Heart right ventricle (tissue), 16 donors: ENCODE measurements at regions of chr7 and their contacts with region 1.

Region 1: GRCh38 chr7:37901236-37901827 is 15.3 kb downstream of the SFRP4 start:
- DNase-seq: no peak
- ATAC-seq: peak in 5 of 8 donors; percentile 47 to 62 (median 57)
- H3K4me3 ChIP-seq: no peak overlapping the region
- H3K27ac ChIP-seq: peak overlapping the region in 1 of 10 donors; percentile 37
- H3K4me1 ChIP-seq: peaks cover 0 to 17% (median 7%) of the 10 kb centered on the region in 9 donors
- H3K27me3 ChIP-seq: no peaks in the 10 kb centered on the region
- CTCF ChIP-seq: peak; percentile 15 to 69 (median 56)

Region 2: GRCh38 chr7:37759526-37759925 is 141.8 kb before region 1 on chr7:
- intact Hi-C with region 1: no loop called
- DNase-seq: no peak
- ATAC-seq: no peak
- H3K4me3 ChIP-seq: no peak overlapping the region
- H3K27ac ChIP-seq: no peak overlapping the region
- H3K4me1 ChIP-seq: peaks cover 0 to 13% (median 7%) of the 10 kb centered on the region in 9 donors
- H3K27me3 ChIP-seq: no peaks in the 10 kb centered on the region
- CTCF ChIP-seq: no peak

Region 3: GRCh38 chr7:38222481-38223096 is 321.3 kb after region 1 on chr7:
- intact Hi-C with region 1: loop called in 9 of 10 experiments (anchors 2 to 5 kb)
- DNase-seq: peak in 1 of 2 donors; percentile 36
- ATAC-seq: peak in 7 of 8 donors; percentile 66 to 85 (median 71)
- H3K4me3 ChIP-seq: no peak overlapping the region
- H3K27ac ChIP-seq: peak overlapping the region in 1 of 10 donors; percentile 41
- H3K4me1 ChIP-seq: peaks cover 0 to 16% (median 0%) of the 10 kb centered on the region in 9 donors
- H3K27me3 ChIP-seq: no peaks in the 10 kb centered on the region
- CTCF ChIP-seq: peak; percentile 73 to 93 (median 89)

Region 4: GRCh38 chr7:38229386-38229785 is 328.1 kb after region 1 on chr7:
- intact Hi-C with region 1: loop called in 8 of 10 experiments (anchors 5 kb)
- DNase-seq: no peak
- ATAC-seq: no peak
- H3K4me3 ChIP-seq: no peak overlapping the region
- H3K27ac ChIP-seq: no peak overlapping the region
- H3K4me1 ChIP-seq: peaks cover 0 to 22% (median 0%) of the 10 kb centered on the region in 9 donors
- H3K27me3 ChIP-seq: no peaks in the 10 kb centered on the region
- CTCF ChIP-seq: no peak

Region 5: DNA sequence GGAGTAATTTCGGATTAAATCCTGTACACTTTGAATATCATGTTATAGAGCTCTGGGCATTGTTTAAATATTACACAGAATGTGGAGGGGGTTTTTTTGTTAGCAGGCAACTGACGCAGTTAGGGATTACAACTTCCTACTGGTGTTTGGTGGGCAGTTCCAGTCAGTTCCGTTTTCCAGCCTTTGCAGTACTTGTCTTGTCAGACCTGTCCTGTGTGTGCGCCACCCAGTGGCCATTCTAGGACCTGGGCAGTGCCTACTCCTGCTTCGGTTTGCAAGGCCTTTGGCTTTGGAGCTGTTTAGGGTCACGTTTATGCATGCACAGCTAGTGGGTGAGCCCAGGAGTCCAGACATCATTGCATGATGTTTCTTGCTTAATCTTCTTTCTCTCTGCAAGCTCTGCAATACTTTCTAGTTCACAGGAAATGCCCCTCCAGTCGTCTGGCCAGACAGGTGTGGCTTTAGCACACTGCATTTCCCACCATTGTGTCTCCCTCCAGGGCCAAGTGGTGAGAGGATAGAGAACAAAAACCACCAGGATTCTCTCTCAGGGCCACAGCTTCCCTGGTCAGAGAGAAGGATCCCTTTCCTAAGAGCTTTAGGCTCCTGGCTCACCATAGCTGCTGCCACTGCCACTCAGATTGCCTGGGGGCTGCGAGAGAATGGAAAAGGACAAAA is 468.6 kb after region 1 on chr7:
- intact Hi-C with region 1: loop called in 1 of 10 experiments (anchors 10 kb)
- DNase-seq: peak; percentile 85 to 87
- ATAC-seq: peak; percentile 89 to 96 (median 94)
- H3K4me3 ChIP-seq: peak overlapping the region in 3 of 10 donors; percentile 10 to 27 (median 22)
- H3K27ac ChIP-seq: peak overlapping the region in 7 of 10 donors; percentile 13 to 66 (median 26)
- H3K4me1 ChIP-seq: peaks cover 0 to 38% (median 7%) of the 10 kb centered on the region in 9 donors
- H3K27me3 ChIP-seq: no peaks in the 10 kb centered on the region
- CTCF ChIP-seq: peak; percentile 48 to 89 (median 81)